Activated CD4-positive, alpha-beta memory T cell treated with anti-CD3 and anti-CD28 coated beads for 36 hours (primary cell): ENCODE measurements at regions of chr7 and their contacts with region 1.

Region 1: GRCh38 chr7:39580149-39580874 is 14.1 kb downstream of the YAE1 start:
- DNase-seq: peak; percentile 83
- H3K4me3 Mint-ChIP-seq: no peak overlapping the region
- H3K27ac Mint-ChIP-seq: no peak overlapping the region
- H3K4me1 Mint-ChIP-seq: peaks cover 8% of the 10 kb centered on the region
- H3K27me3 Mint-ChIP-seq: no peaks in the 10 kb centered on the region

Region 2: DNA sequence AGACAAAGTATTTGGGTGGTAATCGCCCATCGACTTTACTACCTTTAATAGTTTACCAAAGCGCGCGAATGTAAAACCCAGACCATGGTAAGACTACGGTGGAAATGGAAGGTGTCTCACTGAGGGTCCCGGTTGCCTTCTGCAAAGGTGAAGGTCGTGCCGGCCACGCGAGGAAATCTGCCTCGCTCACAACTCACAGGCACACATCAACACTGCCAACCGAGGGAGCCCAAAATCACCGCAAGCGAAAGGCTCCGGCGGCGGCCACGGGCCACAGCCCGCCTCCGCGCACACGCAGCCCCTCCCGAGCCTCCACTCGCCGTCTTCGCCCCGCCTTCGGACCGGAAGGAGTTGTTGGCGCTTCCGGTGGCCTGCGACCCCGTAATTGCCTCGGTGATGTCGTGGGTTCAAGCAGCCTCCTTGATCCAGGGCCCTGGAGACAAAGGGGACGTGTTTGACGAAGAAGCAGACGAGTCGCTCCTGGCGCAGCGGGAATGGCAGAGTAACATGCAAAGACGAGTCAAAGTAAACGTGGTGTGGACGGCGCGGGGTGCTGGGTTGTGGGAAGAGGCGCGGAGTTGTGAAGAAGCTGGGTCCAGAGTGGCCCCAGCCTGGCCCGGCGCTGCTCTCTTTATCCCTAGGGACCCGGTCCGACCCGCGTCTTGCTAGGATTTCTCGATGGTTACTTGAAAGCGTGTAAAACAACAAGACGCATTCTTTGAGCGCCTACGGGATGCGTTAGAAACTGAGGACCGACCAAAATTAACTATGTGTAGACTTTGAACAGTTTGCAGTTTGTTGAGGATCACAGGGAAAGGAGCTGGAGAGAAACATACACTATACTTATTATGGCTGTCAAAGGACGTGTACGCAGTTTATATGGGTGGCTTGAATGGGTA is 14.0 kb before region 1 on chr7 and contains the start of gene YAE1:
- CTCF ChIA-PET with region 1: interaction called, 24 read pairs
- POLR2A ChIA-PET with region 1: interaction called, 5 read pairs
- intact Hi-C with region 1: loop called (anchors 2 kb)
- DNase-seq: peak; percentile 88
- H3K4me3 Mint-ChIP-seq: peak within 1 kb of the TSS; percentile 98
- H3K27ac Mint-ChIP-seq: peak within 1 kb of the TSS; percentile 92
- H3K4me1 Mint-ChIP-seq: peaks cover 17% of the 10 kb centered on the region
- H3K27me3 Mint-ChIP-seq: no peaks in the 10 kb centered on the region
- total RNA-seq, gene YAE1: 7.3 to 8.8 TPM

Region 3: DNA sequence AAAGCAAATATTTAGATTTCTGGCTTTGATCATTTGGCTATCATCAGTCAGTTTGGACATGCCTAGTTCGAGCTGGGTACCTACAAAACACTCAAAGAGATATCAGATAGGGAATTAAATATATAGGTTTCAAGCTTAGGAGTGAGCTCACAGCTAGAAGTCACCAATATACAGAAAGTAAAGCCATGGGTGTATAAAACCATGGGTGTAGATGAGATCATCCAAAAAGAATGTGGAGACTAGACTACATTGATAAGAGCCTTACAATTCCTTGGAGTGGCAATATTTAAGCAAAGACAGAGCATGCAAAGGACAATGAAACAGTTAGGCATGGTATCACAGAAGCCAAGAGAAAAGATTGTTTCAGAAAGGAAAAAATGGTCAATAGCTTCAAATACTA is 35.8 kb after region 1 on chr7:
- CTCF ChIA-PET with region 1: interaction called, 53 read pairs
- POLR2A ChIA-PET with region 1: no interaction called
- intact Hi-C with region 1: no loop called
- DNase-seq: no peak
- H3K4me3 Mint-ChIP-seq: no peak overlapping the region
- H3K27ac Mint-ChIP-seq: no peak overlapping the region
- H3K4me1 Mint-ChIP-seq: no peaks in the 10 kb centered on the region
- H3K27me3 Mint-ChIP-seq: peaks cover 3% of the 10 kb centered on the region

Region 4: DNA sequence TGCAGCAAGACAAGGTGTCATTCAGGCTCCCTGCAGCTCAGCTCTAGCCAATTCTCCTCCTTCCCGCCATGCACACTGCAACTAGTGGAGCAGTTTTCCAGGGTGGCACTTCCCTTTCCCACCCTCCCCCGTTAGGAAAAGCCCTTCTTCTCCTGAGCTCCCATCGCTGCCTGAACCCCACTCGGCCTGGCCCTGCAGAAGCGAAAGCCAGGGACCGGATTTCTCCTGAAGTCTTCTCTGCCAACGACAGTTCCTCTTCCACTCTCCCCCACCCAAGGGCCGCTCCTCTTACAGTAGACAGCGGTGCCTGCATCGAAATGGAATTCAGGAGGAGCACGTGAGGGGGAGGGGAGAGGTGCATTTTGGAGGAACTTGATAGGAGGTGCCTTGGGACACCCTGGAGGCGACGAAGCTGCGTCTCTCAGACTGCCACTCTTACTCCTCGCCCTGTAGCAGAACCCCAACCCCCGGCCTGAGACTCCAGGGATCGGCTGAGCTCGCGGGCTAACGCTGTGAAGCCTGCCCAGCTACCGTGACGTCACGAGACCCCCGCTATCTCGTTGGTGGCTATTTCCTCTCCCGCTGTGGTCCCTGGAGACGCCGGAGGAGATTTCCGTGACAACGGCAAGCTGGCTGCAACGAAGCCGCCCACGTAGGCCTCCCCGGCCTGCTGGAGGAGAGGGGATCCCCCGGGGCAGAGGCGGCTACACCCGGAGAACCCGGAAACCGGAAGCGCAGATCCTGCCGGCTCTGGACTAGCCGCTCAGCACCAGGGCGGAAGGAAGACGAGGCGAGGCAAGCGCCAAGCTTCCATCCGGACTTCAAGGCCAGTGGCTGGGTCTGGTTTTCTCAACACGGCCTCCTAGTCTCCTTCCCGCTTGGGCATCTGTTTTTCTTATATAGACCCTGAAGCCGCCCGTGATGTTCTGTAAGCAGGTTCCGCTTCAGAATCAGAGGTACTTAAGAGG is 152.8 kb after region 1 on chr7:
- CTCF ChIA-PET with region 1: interaction called, 520 read pairs
- POLR2A ChIA-PET with region 1: interaction called, 3 read pairs
- intact Hi-C with region 1: no loop called
- DNase-seq: peak; percentile 98
- H3K4me3 Mint-ChIP-seq: peak overlapping the region; percentile 88
- H3K27ac Mint-ChIP-seq: peak overlapping the region; percentile 75
- H3K4me1 Mint-ChIP-seq: peaks cover 33% of the 10 kb centered on the region
- H3K27me3 Mint-ChIP-seq: no peaks in the 10 kb centered on the region

Region 5: DNA sequence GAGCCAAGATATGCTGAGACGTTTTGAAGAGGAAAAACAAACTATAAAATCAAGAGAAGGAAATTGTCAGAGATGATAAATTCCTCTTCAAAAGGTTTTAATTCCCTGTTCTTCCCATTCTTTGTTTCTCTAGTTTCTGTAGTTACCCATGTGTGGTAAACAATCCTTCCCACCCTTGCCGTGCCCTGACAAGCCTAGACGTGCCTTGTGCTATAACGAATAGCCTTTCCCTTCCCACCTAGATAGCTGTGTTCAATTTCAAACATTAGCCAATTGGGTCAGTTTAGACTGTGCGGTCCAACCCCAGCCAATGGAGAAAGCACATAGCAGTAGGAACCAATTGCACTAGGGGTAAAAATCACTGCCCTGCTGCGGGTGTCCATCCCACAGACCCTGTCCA is 181.1 kb after region 1 on chr7:
- CTCF ChIA-PET with region 1: interaction called, 14 read pairs
- POLR2A ChIA-PET with region 1: no interaction called
- intact Hi-C with region 1: no loop called
- DNase-seq: no peak
- H3K4me3 Mint-ChIP-seq: no peak overlapping the region
- H3K27ac Mint-ChIP-seq: no peak overlapping the region
- H3K4me1 Mint-ChIP-seq: no peaks in the 10 kb centered on the region
- H3K27me3 Mint-ChIP-seq: no peaks in the 10 kb centered on the region